ENCODE measurements at regions of chr6 and their contacts with region 1.

Region 1: DNA sequence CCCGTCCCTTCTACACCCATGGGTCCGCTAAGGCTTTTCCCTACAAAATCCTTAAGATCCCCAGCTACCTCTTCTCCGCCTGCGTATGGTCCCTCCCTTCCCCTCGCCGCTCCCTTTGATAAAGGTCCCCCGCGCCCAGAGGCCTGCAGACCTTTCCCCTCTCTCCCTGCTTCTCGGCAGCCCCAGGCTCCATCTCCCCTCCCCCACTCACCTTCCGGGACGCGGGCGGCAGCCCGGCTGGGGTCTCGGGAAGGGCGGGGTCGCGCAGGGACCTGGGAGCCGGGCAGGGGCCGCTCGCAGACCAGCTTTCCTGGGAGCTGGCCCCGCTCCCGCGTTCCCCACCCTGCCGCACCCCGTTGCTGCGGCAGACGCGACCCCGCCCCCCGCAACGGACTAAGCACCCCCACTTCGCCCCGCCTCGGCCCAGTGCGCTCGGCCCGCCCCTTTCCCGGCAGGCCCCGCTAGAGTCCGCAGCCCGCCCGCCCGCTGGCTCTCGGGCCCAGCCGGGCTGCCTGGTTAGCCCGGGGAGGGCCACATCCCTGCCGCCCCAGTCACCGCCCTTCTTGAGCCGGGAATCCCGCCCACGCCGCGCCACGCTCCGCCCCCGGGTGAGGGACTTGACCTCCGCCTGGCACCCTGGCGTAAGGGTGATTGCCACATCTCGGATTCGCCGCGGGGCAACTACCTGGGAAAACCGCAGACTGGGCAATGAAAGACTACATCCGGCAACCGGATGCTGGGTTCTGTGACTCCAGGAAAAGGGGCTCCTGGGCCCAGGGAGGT is at the start of gene FLOT1:
- DNase-seq: peak; percentile 100
- total RNA-seq, gene FLOT1: 150 to 167 TPM

Region 2: GRCh38 chr6:30508890-30509736 is 233.4 kb before region 1 on chr6:
- intact Hi-C with region 1: no loop called
- DNase-seq: no peak

Region 3: GRCh38 chr6:30769088-30769852 is 26.8 kb after region 1 on chr6:
- intact Hi-C with region 1: loop called in 1 of 2 experiments (anchors 1 kb)
- DNase-seq: peak; percentile 85

Region 4: GRCh38 chr6:30781743-30782424 is 39.4 kb after region 1 on chr6:
- intact Hi-C with region 1: loop called in 1 of 2 experiments (anchors 5 kb)
- DNase-seq: peak; percentile 98

Region 5: GRCh38 chr6:30821862-30822782 is 79.6 kb after region 1 on chr6:
- intact Hi-C with region 1: loop called (anchors 5 kb)
- DNase-seq: no peak

Region 6: GRCh38 chr6:31175971-31176370 is 433.5 kb after region 1 on chr6:
- intact Hi-C with region 1: no loop called
- DNase-seq: no peak

Region 7: DNA sequence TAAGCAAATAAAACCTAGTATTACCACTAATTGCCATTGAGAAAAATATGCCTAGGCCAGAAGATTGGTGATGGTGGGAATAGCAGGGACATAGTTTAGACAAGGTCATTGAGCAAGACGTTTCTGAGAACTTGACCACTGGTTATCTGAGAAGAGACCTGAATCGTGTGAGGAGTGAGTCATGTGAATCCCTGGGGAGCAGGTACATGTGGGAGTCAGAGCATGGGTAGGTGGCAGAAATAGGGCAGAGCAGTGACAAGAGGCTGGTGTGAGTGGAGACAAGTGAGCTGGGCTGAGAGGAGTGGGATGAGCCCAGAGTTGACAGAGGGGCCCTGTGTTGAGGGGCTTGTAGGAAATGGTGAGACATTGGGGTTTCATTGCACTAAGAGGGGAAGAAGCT is 677.3 kb after region 1 on chr6:
- intact Hi-C with region 1: loop called in 1 of 2 experiments (anchors 10 kb)
- DNase-seq: no peak